Lower leg skin (tissue), 4 donors: ENCODE measurements at regions of chr21 and their contacts with region 1.

Region 1: DNA sequence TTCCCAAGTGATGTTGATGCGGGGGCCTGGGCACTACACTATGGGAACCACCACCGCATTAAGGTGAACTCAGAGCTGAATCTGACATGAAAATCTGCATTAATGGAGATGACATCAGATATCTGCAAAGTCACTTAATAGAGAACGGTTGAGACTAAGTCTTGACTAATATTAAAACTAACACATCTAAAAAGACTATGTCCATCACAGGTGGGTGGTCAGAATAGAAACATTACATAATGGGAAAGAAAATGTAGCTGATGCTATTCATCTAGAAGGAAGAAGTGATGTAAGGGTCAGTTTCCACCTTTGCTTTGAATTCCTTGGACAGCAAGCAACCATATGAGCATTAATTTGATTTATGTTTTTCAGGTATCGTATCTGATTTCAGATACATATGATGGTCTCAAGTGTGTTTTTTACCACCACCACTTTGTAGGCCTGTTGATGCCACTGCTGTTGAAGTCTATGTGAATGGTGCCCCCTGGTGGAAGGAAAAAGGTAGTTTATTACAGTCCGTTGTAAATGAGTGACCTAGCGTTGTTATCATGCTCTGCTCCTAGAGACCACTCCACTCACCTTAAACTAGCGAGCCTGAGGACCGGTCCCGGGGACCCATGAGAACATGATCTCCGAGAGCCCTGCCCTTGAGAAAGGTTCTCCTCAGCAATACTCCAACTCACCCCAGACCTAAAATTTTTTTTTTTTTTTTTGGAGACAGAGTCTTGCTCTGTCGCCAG is 73.5 kb downstream of the BACH1 start:
- DNase-seq: peak in 1 of 2 donors; percentile 60
- H3K4me3 ChIP-seq: no peak overlapping the region
- CTCF ChIP-seq: peak in 1 of 3 donors; percentile 73
- POLR2A ChIP-seq: no peak

Region 2: GRCh38 chr21:29002442-29003144 is 369.6 kb before region 1 on chr21:
- intact Hi-C with region 1: no loop called
- DNase-seq: peak; percentile 94 to 99
- H3K4me3 ChIP-seq: peak overlapping the region; percentile 46
- CTCF ChIP-seq: no peak
- POLR2A ChIP-seq: peak in 1 of 2 donors; percentile 80

Region 3: DNA sequence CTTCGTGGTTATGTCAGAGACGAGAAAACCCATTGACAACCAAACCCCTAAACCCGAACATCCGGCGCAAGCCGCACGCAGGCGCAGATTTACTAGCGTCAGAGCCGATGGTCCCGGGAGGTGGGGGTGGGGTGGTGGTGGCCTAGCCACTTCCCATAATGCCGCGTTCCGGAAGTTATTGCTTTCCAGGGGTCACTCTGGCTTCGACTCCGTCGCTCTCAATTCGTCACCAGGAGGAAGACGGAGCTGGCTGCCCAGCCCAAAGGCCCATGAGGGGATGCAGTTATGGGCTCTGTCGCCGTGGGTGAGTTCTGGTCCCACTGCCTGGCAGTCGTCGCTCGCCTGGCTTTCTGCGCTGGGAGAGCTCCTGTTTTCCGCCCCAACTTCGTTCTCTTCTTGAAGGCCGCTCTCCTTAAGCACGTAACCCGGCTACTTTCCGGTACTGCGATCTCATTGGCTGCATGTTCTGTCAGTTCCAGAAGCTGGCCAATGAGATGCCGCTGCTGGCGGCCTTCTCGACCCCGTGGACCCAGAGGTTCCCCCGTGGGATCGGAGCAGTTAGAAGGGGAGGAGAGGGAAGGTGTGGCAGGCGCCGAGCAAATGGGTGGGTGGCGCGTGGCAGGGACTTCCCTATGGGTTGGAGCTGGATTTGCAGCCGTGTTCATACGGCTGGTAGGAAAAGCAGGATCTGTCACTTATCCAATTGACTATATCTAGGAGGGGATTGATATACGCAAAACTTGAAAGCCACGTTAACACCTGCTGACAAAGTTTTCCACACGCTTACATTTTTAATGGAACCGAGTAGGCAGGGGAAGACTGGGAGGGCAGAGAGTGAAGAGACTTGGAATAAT is 347.5 kb before region 1 on chr21 and contains the start of gene USP16:
- intact Hi-C with region 1: loop called (anchors 10 kb)
- DNase-seq: peak; percentile 97 to 99
- H3K4me3 ChIP-seq: peak within 1 kb of the TSS; percentile 55
- CTCF ChIP-seq: no peak
- POLR2A ChIP-seq: no peak
- total RNA-seq, gene USP16: 21.3 to 25.8 (median 23.4) TPM

Region 4: DNA sequence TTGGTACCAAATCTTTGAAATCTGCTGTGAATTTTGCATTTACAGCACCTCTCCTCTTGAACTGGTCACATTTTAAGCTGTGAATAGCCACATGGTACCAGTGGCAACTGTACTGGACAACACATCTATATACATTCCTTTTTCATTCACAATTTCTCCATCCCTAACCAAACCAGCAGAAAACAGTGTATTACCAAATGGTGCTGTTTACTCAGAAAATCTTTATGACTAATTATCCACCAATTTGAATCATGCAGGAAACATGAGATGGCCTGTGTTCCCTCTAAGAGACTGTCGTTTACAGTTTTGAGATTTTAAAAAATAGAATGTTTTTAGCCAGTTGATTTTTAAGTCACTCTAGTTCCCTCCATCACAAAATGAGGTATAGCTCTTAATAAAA is 281.2 kb before region 1 on chr21:
- intact Hi-C with region 1: loop called (anchors 2 kb)
- DNase-seq: no peak
- H3K4me3 ChIP-seq: no peak overlapping the region
- CTCF ChIP-seq: no peak
- POLR2A ChIP-seq: no peak

Region 5: GRCh38 chr21:29164325-29164942 is 207.8 kb before region 1 on chr21:
- intact Hi-C with region 1: loop called (anchors 10 kb)
- DNase-seq: no peak
- H3K4me3 ChIP-seq: no peak overlapping the region
- CTCF ChIP-seq: no peak
- POLR2A ChIP-seq: no peak